ENCODE measurements at regions of chr20 and their contacts with region 1.

Region 1: DNA sequence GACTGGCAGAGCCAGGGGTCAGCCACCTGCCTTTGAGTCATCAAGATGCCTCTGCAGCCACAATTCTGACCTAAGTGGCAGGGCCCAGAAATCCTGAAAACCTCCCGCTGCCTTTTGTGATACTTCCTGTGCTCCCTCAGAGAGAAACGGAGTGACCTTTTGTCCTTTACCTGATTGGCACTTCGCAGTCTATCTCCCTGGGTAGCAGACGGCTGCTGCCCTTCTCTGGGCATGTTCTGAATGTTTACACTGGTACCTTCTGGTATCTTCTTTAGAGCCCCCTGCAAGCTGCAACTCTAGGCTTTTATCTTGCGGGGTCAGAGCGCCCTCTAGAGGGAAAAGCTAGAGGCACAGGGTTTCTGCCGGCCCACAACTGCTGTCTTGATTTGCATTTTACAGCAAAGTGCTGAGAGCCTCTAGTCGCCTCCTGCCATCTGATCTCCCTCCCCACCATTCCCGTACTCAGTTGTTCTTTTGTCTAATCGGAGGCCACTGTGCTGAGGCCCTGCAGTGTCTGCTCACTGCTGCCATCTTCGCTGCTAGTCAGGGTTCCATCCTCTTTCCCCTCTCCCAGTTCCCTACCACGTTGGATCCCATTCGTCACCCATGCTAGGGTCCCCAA is 26.9 kb downstream of the SPATA2 start:
- DNase-seq: peak in 1 of 2 donors; percentile 72
- H3K4me3 ChIP-seq: no peak overlapping the region
- H3K27ac ChIP-seq: peak overlapping the region; percentile 77 to 87
- H3K4me1 ChIP-seq: peaks cover 0 to 43% (median 42%) of the 10 kb centered on the region in 4 donors
- H3K27me3 ChIP-seq: no peaks in the 10 kb centered on the region
- CTCF ChIP-seq: peak; percentile 75 to 85

Region 2: DNA sequence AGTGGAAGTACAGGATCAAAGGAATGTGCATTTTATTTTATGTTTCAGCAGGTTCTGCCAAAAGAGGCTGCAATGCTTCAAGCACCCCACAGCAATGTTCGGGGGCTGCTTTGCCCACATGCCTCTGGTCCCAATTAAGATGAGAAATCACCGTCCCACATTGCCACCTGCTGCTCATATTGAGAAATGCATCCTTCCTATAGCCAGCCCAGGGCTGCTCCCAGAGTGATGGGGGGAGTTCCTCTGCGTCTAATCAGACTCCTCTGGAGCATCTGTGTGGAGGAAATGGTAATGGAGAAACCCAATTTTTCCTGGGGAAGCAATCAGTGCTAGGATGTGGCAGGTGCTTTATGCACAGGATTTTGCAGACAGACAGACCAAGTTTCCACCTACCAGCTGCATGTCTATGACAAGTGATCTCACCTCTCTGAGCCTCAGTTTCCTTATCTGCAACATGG is 354.2 kb before region 1 on chr20:
- intact Hi-C with region 1: loop called (anchors 10 kb)
- DNase-seq: no peak
- H3K4me3 ChIP-seq: no peak overlapping the region
- H3K27ac ChIP-seq: peak overlapping the region; percentile 9 to 13
- H3K4me1 ChIP-seq: peaks cover 0 to 41% (median 7%) of the 10 kb centered on the region in 4 donors
- H3K27me3 ChIP-seq: no peaks in the 10 kb centered on the region
- CTCF ChIP-seq: peak; percentile 82 to 86

Region 3: GRCh38 chr20:49812463-49813304 is 75.8 kb before region 1 on chr20 and contains the start of gene SLC9A8:
- intact Hi-C with region 1: loop called (anchors 10 kb)
- DNase-seq: peak; percentile 92 to 94
- H3K4me3 ChIP-seq: peak within 1 kb of the TSS; percentile 60 to 71
- H3K27ac ChIP-seq: peak within 1 kb of the TSS; percentile 84 to 95
- H3K4me1 ChIP-seq: peaks cover 0 to 19% (median 15%) of the 10 kb centered on the region in 4 donors
- H3K27me3 ChIP-seq: no peaks in the 10 kb centered on the region
- CTCF ChIP-seq: peak; percentile 42 to 52

Region 4: DNA sequence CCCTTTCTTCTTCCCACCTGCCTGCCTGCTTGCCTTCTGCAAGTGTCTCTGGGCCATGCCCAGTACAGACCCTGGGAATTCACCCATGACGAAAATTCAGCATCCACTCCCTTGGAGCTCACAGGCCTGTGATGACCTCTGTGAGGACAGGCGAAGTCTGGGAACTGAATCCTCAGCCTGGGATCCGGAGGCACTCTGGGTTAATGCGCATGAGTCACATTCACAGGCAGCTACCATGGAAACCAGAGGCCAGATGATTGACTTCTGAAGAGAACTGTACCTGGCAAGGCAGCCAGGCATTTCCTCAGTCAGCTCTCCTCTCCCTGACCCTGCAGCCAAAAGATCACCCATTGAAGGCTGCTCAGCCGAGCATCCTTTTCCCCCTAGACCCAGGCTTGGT is 34.8 kb before region 1 on chr20:
- intact Hi-C with region 1: loop called (anchors 5 kb)
- DNase-seq: peak in 1 of 2 donors; percentile 82
- H3K4me3 ChIP-seq: no peak overlapping the region
- H3K27ac ChIP-seq: peak overlapping the region; percentile 74 to 78
- H3K4me1 ChIP-seq: peaks cover 0 to 56% (median 40%) of the 10 kb centered on the region in 4 donors
- H3K27me3 ChIP-seq: no peaks in the 10 kb centered on the region
- CTCF ChIP-seq: no peak

Region 5: DNA sequence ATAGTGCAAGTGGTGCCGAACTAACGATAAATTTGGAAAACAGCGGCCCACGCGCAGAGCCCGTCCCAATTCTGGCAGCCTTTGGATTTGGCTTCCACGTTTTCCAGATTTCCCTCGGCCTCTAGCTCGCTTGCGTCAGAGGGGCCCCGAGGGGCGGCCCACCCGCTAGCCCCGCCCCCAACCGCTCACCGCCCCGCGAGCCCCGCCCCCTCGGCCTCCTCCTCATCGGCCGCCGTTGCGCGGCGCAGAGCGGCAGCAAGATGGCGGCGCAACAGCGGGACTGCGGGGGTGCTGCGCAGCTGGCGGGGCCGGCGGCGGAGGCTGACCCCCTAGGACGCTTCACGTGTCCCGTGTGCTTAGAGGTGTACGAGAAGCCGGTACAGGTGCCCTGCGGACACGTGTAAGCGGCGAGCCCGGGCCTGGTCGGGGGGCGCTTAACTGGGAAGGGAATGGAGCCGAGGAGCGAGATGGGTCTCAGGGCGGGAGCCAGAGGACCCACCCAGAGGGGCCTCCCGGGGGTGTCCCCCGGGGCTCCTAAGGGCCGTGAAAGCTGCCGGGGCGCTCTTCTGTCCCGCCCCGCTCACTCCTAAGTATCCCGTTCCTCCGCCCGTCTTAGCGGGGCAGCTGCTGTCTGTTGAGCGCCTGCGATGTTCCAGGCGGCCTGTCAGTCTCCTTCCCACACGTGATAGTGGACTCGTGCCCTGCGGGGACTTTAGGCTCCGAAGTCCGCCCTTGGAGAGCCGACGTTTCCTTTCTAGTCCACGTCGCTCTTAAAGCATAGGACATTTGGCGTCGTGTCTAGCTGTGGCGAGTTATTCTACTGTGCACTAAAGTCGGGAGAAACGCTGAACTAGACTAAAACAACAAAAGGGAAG is 47.9 kb after region 1 on chr20 and contains the start of gene RNF114:
- intact Hi-C with region 1: no loop called
- DNase-seq: peak; percentile 87 to 95
- H3K4me3 ChIP-seq: peak within 1 kb of the TSS; percentile 86 to 87
- H3K27ac ChIP-seq: peak within 1 kb of the TSS; percentile 86 to 91
- H3K4me1 ChIP-seq: peaks cover 0 to 33% (median 25%) of the 10 kb centered on the region in 4 donors
- H3K27me3 ChIP-seq: no peaks in the 10 kb centered on the region
- CTCF ChIP-seq: no peak